ENCODE measurements at regions of chr12 and their contacts with region 1.

Region 1: DNA sequence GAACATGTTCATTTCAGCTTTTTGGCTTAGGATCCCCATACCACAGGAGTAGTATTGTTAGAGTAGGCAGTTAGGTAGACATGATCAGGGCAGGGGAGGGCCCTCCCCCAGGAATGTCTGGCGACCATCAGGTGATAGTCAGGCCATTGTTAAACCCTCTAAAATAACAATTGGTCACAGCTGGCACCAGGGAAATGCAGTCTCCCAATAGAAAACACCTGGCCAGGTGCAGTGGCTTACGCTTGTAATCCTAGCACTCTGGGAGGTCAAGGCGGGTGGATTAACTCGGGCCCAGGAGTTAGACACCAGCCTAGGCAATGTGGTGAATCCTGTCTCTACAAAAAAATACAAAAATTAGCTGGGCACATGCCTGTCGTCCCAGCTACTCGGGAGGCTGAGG is 187.1 kb downstream of the MON2 start:
- DNase-seq: no peak
- CTCF ChIP-seq: no peak

Region 2: GRCh38 chr12:62640910-62641448 is 12.8 kb before region 1 on chr12:
- CTCF ChIA-PET with region 1: interaction called, 24 read pairs
- POLR2A ChIA-PET with region 1: no interaction called
- DNase-seq: peak; percentile 69
- CTCF ChIP-seq: no peak